ENCODE measurements at regions of chr3 and their contacts with region 1.

Region 1: DNA sequence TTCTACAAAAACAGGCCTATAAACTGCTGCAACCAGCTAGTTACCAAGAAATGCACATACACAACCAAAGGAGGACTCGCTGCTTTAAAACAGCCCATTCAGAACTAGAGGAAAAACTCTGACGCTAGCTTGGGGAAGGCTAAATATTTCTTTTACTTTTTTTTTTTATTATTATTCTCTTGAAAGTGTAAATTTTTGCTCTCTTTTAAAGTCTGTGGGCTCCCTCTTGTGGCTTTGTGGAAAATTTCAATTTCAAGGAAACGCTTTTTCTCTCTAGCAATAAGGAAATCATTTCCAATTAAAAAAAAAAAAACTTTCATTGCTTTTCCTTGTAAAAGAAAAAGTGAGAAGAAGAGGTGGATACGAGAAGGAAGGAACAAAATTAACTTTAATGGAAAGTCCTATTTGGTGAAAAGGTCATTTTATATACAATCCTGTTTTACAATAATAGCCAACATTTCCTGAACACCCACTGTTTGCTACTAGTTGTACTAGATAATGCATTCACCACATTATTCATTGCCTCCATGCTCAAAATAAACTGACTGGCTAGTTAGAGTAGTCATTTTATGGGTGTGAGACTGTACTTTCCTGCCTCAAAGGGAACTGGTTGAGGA is 51.2 kb upstream of the SAMMSON start:
- DNase-seq: no peak
- H3K4me3 Mint-ChIP-seq: no peak overlapping the region
- H3K27ac Mint-ChIP-seq: no peak overlapping the region
- H3K4me1 Mint-ChIP-seq: no peaks in the 10 kb centered on the region
- H3K27me3 Mint-ChIP-seq: no peaks in the 10 kb centered on the region

Region 2: GRCh38 chr3:69925506-69925905 is 22.8 kb before region 1 on chr3:
- CTCF ChIA-PET with region 1: interaction called, 3 read pairs
- intact Hi-C with region 1: loop called (anchors 1 kb)
- DNase-seq: no peak
- H3K4me3 Mint-ChIP-seq: no peak overlapping the region
- H3K27ac Mint-ChIP-seq: no peak overlapping the region
- H3K4me1 Mint-ChIP-seq: no peaks in the 10 kb centered on the region
- H3K27me3 Mint-ChIP-seq: peaks cover 5% of the 10 kb centered on the region

Measured in activated naive CD4-positive, alpha-beta T cell treated with anti-CD3 and anti-CD28 coated beads for 36 hours (primary cell).